ENCODE measurements at regions of chr4 and their contacts with region 1.

Region 1: GRCh38 chr4:143375313-143376073 is 38.8 kb downstream of the GAB1 start:
- DNase-seq: no peak
- ATAC-seq: peak; percentile 71
- H3K4me3 ChIP-seq: no peak overlapping the region
- H3K27ac ChIP-seq: peak overlapping the region; percentile 5; the same call in 1 of the 2 replicates
- H3K4me1 ChIP-seq: peaks cover 40% of the 10 kb centered on the region
- H3K27me3 ChIP-seq: no peaks in the 10 kb centered on the region
- CTCF ChIP-seq: peak; percentile 68 to 78 (median 78)
- EP300 ChIP-seq: no peak
- POLR2A ChIP-seq: no peak
- RAD21 ChIP-seq: peak; percentile 88

Region 2: GRCh38 chr4:143207557-143207956 is 167.9 kb before region 1 on chr4:
- CTCF ChIA-PET with region 1: interaction called, 20 read pairs
- POLR2A ChIA-PET with region 1: interaction called, 3 read pairs
- RAD21 ChIA-PET with region 1: interaction called, 13 read pairs
- SMC1A ChIA-PET with region 1: interaction called, 6 read pairs
- in situ Hi-C with region 1: no loop called
- intact Hi-C with region 1: loop called (anchors 5 kb)
- DNase-seq: no peak
- ATAC-seq: peak; percentile 48; the same call in 2 of the 3 replicates
- H3K4me3 ChIP-seq: no peak overlapping the region
- H3K27ac ChIP-seq: no peak overlapping the region
- H3K4me1 ChIP-seq: no peaks in the 10 kb centered on the region
- H3K27me3 ChIP-seq: no peaks in the 10 kb centered on the region
- CTCF ChIP-seq: peak in 2 of 3 experiments; percentile 7 to 14; a peak in 1 of 6 replicates
- EP300 ChIP-seq: no peak
- POLR2A ChIP-seq: no peak
- RAD21 ChIP-seq: peak; percentile 28; the same call in 1 of the 2 replicates

Region 3: DNA sequence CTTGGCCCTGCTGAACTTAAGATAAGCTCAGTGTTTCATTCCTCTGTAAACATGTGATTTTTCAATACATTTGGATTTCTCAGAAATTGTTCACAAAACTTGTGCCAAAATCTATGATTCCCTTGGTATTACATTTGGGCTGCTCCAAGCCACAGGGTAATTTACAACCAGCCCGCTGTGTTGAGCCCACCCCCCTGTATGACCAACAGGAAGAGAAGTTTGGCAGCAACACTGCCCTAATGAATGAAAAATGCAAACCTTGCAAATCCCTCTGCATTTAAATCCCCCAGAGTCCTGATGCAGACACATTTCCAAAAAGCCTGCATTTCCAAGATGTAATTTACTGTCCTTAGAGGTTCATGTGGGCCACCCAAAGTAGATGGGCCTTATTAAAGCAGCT is 73.0 kb before region 1 on chr4:
- CTCF ChIA-PET with region 1: no interaction called
- POLR2A ChIA-PET with region 1: no interaction called
- RAD21 ChIA-PET with region 1: no interaction called
- SMC1A ChIA-PET with region 1: no interaction called
- in situ Hi-C with region 1: no loop called
- intact Hi-C with region 1: no loop called
- DNase-seq: no peak
- ATAC-seq: no peak
- H3K4me3 ChIP-seq: no peak overlapping the region
- H3K27ac ChIP-seq: no peak overlapping the region
- H3K4me1 ChIP-seq: no peaks in the 10 kb centered on the region
- H3K27me3 ChIP-seq: no peaks in the 10 kb centered on the region
- CTCF ChIP-seq: no peak
- EP300 ChIP-seq: no peak
- POLR2A ChIP-seq: no peak
- RAD21 ChIP-seq: no peak

Region 4: DNA sequence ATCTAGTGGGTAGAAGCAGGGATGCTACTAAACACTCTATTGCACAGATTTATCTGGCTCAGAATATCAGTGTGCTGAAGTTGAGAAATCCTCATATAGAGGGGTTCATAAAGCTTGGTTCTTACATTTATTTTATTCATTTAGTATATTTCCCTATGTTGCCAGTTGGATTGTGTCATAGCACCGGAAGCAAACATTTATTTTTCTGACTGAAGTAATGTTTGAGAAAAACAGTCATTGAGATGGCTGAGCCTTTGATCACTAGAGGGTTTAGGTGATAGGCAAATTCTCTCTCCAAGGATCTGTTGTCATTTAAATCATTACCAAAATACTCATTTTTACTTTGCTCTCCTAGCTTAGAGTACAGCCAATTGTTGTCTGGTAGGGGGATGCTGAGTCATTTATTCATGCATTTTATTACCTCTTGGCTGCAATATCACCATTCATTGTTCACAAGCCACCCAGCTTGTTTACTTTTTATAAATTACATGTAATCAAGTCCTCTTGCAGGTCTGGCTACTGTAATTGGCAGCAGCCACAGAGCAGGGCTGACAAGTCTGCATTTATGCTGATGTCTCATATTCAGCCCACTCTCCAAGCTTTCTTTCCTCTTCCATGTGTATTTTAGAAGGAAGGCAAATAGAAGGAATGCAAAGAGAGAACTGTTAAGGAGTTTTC is 23.6 kb before region 1 on chr4:
- CTCF ChIA-PET with region 1: interaction called, 76 read pairs
- POLR2A ChIA-PET with region 1: interaction called, 5 read pairs
- RAD21 ChIA-PET with region 1: interaction called, 28 read pairs
- SMC1A ChIA-PET with region 1: interaction called, 55 read pairs
- in situ Hi-C with region 1: no loop called
- intact Hi-C with region 1: no loop called
- DNase-seq: no peak
- ATAC-seq: no peak; the same call in 2 of the 3 replicates
- H3K4me3 ChIP-seq: no peak overlapping the region
- H3K27ac ChIP-seq: no peak overlapping the region
- H3K4me1 ChIP-seq: 0 out of 2 replicates have a peak, but pooled peaks cover 1% of the 10 kb centered on the region
- H3K27me3 ChIP-seq: no peaks in the 10 kb centered on the region
- CTCF ChIP-seq: no peak
- EP300 ChIP-seq: no peak
- POLR2A ChIP-seq: no peak
- RAD21 ChIP-seq: no peak

Region 5: GRCh38 chr4:143399113-143399949 is 23.8 kb after region 1 on chr4:
- CTCF ChIA-PET with region 1: interaction called, 85 read pairs
- POLR2A ChIA-PET with region 1: interaction called, 17 read pairs
- RAD21 ChIA-PET with region 1: interaction called, 87 read pairs
- SMC1A ChIA-PET with region 1: interaction called, 204 read pairs
- in situ Hi-C with region 1: no loop called
- intact Hi-C with region 1: loop called (anchors 2 kb)
- DNase-seq: no peak
- ATAC-seq: peak; percentile 76
- H3K4me3 ChIP-seq: no peak overlapping the region
- H3K27ac ChIP-seq: no peak overlapping the region
- H3K4me1 ChIP-seq: peaks cover 19% of the 10 kb centered on the region
- H3K27me3 ChIP-seq: no peaks in the 10 kb centered on the region; a peak in 1 of 4 replicates
- CTCF ChIP-seq: peak; percentile 62 to 69 (median 62)
- EP300 ChIP-seq: no peak
- POLR2A ChIP-seq: no peak
- RAD21 ChIP-seq: peak; percentile 72

Region 6: DNA sequence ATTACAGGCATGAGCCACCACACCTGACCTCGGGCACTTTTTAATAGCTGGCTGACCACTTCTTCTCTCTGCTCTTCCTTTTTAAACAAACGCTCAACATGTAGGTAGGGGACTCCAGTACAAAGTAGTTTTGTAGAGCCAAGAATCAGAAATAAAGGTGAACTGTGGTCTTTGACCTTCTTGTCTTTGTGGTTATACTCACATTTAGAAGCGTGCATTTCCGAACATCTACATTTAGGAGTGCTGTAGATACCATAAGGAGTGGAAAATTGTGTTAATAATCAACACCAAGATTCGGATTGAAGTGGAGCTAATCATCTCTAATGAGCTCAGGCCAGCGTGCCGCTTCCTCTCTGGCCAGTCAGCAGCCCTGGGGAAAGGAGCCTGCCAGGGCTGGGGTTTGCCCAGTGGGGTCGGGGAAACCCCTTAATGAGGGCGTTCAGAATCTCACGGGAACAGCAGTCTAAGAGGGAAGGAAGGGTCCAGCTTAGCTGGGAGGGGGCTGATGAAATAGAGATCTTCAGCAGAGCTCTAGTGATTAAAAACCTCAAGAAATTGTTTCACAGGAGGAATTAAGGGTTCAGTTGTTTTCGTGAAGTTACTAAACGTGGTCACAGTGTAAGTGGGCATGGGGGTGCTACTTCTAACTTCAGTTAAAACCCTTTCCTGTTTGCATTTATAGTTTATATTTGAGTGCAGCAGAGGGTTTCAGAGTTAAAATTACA is 42.3 kb after region 1 on chr4:
- CTCF ChIA-PET with region 1: interaction called, 63 read pairs
- POLR2A ChIA-PET with region 1: interaction called, 16 read pairs
- RAD21 ChIA-PET with region 1: interaction called, 97 read pairs
- SMC1A ChIA-PET with region 1: interaction called, 89 read pairs
- in situ Hi-C with region 1: no loop called
- intact Hi-C with region 1: no loop called
- DNase-seq: peak; percentile 74
- ATAC-seq: peak; percentile 97
- H3K4me3 ChIP-seq: no peak overlapping the region
- H3K27ac ChIP-seq: no peak overlapping the region
- H3K4me1 ChIP-seq: no peaks in the 10 kb centered on the region
- H3K27me3 ChIP-seq: no peaks in the 10 kb centered on the region
- CTCF ChIP-seq: no peak
- EP300 ChIP-seq: peak in 1 of 2 experiments; percentile 70; a peak in 3 of 4 replicates
- POLR2A ChIP-seq: no peak
- RAD21 ChIP-seq: no peak

Region 7: GRCh38 chr4:143482840-143483239 is 107.3 kb after region 1 on chr4:
- CTCF ChIA-PET with region 1: interaction called, 31 read pairs
- POLR2A ChIA-PET with region 1: interaction called, 4 read pairs
- RAD21 ChIA-PET with region 1: interaction called, 101 read pairs
- SMC1A ChIA-PET with region 1: interaction called, 116 read pairs
- in situ Hi-C with region 1: no loop called
- intact Hi-C with region 1: loop called (anchors 1 kb)
- DNase-seq: no peak
- ATAC-seq: peak; percentile 83
- H3K4me3 ChIP-seq: no peak overlapping the region
- H3K27ac ChIP-seq: no peak overlapping the region
- H3K4me1 ChIP-seq: no peaks in the 10 kb centered on the region
- H3K27me3 ChIP-seq: no peaks in the 10 kb centered on the region; a peak in 1 of 4 replicates
- CTCF ChIP-seq: peak; percentile 38 to 74 (median 42); a peak in 4 of 6 replicates
- EP300 ChIP-seq: no peak
- POLR2A ChIP-seq: no peak
- RAD21 ChIP-seq: peak; percentile 94

Measured in GM12878 (cell line).